ENCODE measurements at regions of chr1 and their contacts with region 1.

Region 1: DNA sequence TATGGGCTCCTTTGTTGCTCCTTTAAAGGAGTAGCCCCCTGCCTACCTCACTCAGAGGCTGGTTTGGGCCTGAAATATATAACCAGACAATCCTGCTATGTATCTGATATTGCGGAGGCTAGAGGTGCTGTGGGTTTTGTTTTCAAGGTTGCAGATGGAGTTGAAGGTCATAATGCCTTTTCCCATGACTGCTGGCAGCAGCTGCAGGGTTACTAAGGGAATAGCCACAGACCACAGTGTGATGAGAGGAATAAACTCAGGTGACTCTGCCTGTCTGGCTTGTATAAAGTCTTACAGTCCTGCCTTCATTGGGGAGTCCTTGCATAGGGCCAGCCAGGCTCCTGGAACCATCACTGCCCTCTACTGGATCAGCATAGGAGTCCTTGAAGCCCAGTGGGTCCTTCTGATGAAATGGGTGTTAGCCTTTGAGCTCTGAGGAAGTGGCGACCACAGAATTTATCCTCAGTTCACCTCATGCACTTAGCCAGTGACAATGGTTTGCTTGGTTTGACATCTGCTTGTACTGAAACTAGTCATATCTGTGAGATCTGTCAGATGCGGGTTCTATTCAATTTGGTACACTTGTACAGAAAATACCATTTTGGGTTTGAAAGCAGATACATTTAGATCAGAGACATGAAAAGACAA is 174.4 kb upstream of the HMCN1 start:
- DNase-seq: peak; percentile 67
- ATAC-seq: peak; percentile 92
- H3K4me3 Mint-ChIP-seq: peak overlapping the region; percentile 72
- H3K27ac Mint-ChIP-seq: peak overlapping the region; percentile 88
- H3K4me1 Mint-ChIP-seq: peaks cover 42% of the 10 kb centered on the region
- H3K27me3 Mint-ChIP-seq: no peaks in the 10 kb centered on the region

Region 2: GRCh38 chr1:185420588-185421081 is 139.2 kb before region 1 on chr1:
- POLR2A ChIA-PET with region 1: interaction called, 18 read pairs
- DNase-seq: peak; percentile 42
- ATAC-seq: peak; percentile 88
- H3K4me3 Mint-ChIP-seq: peak overlapping the region; percentile 75
- H3K27ac Mint-ChIP-seq: peak overlapping the region; percentile 91
- H3K4me1 Mint-ChIP-seq: peaks cover 61% of the 10 kb centered on the region
- H3K27me3 Mint-ChIP-seq: no peaks in the 10 kb centered on the region

Region 3: GRCh38 chr1:185439727-185440415 is 119.9 kb before region 1 on chr1:
- POLR2A ChIA-PET with region 1: interaction called, 21 read pairs
- DNase-seq: peak; percentile 45
- ATAC-seq: peak; percentile 87
- H3K4me3 Mint-ChIP-seq: no peak overlapping the region
- H3K27ac Mint-ChIP-seq: no peak overlapping the region
- H3K4me1 Mint-ChIP-seq: peaks cover 21% of the 10 kb centered on the region
- H3K27me3 Mint-ChIP-seq: no peaks in the 10 kb centered on the region

Region 4: GRCh38 chr1:185636848-185637247 is 77.0 kb after region 1 on chr1:
- POLR2A ChIA-PET with region 1: interaction called, 10 read pairs
- DNase-seq: no peak
- ATAC-seq: peak; percentile 98
- H3K4me3 Mint-ChIP-seq: peak overlapping the region; percentile 43
- H3K27ac Mint-ChIP-seq: peak overlapping the region; percentile 81
- H3K4me1 Mint-ChIP-seq: peaks cover 25% of the 10 kb centered on the region
- H3K27me3 Mint-ChIP-seq: no peaks in the 10 kb centered on the region

Measured in activated naive CD8-positive, alpha-beta T cell treated with anti-CD3 and anti-CD28 coated beads, Interleukin-2, amount 10 ng/mL, durations not matched to agents 7 days and 5 days (primary cell).